PC-9 (cell line): ENCODE measurements at regions of chr5 and their contacts with region 1.

Region 1: GRCh38 chr5:151315998-151316597 is 12.5 kb upstream of the SLC36A3 start:
- DNase-seq: peak; percentile 55 to 78
- H3K4me3 ChIP-seq: no peak overlapping the region
- H3K27ac ChIP-seq: no peak overlapping the region
- H3K4me1 ChIP-seq: no peaks in the 10 kb centered on the region
- H3K27me3 ChIP-seq: peaks cover 7% of the 10 kb centered on the region; the same call in 1 of the 2 replicates
- CTCF ChIP-seq: peak; percentile 91

Region 2: DNA sequence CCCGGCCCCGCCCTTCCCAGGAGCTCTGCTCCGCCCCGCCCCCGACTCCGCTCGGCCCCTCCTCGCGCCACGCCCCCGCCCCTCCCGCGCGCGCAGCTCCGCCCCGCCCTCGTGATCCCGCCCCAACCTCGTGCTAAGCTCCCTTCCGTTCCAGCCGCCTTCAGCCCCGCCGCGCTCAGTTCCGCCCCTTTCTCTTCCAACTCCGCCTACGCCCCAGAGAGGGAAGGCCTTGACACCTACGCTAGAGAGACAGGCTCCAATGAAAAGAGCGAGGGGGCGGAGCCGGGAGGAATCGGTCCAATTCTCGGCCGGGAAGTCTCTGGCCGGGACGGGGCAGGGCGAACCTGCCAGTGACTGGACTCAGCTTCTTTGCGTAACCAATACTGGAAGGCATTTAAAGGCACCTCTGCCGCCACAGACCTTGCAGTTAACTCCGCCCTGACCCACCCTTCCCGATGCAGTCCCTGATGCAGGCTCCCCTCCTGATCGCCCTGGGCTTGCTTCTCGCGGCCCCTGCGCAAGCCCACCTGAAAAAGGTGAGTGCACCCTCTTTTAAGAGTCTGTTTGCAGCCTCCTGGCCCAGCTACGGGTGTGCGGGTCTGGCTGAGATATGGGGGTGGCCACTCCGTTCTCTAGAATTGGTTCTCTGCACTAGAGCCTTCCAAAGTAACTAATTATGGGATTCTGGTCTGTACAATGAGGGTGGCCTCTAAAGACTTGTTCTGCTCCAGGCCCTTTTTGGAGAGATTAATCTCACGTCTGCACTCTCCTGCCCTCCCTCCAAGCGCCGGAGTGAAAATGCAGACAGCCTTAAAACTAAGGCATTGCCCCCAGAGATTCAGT is 63.1 kb before region 1 on chr5 and contains the start of gene GM2A:
- CTCF ChIA-PET with region 1: interaction called, 11 read pairs
- POLR2A ChIA-PET with region 1: no interaction called
- intact Hi-C with region 1: no loop called
- DNase-seq: peak; percentile 98 to 100
- H3K4me3 ChIP-seq: peak within 1 kb of the TSS; percentile 97
- H3K27ac ChIP-seq: no peak within 1 kb of the TSS
- H3K4me1 ChIP-seq: peaks cover 20% of the 10 kb centered on the region
- H3K27me3 ChIP-seq: no peaks in the 10 kb centered on the region
- CTCF ChIP-seq: no peak
- total RNA-seq, gene GM2A: 24.5 and 26.7 TPM in 2 replicates

Region 3: GRCh38 chr5:151378616-151379015 is 62.5 kb after region 1 on chr5:
- CTCF ChIA-PET with region 1: no interaction called
- POLR2A ChIA-PET with region 1: no interaction called
- intact Hi-C with region 1: no loop called
- DNase-seq: no peak
- H3K4me3 ChIP-seq: no peak overlapping the region
- H3K27ac ChIP-seq: no peak overlapping the region
- H3K4me1 ChIP-seq: no peaks in the 10 kb centered on the region; the same call in 1 of the 2 replicates
- H3K27me3 ChIP-seq: no peaks in the 10 kb centered on the region
- CTCF ChIP-seq: no peak

Region 4: DNA sequence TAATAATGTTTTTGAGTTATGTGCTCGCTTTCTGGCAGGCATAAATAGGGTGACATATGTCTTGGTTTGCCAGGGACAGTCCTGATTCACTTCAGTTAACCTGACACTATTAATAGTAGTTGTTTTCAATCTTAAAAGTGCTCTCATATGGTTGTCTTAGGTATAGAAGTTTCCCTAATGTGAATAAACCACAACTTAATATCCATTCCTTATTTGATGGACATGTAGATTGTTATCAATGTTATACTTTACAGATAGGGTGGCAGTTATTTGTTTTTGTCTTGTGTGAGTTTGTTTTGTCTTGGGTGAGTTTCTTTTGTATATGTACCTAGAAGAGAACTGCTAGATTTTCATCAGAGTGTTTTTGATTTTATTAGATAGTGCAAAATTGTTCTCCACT is 463.5 kb after region 1 on chr5:
- CTCF ChIA-PET with region 1: no interaction called
- POLR2A ChIA-PET with region 1: no interaction called
- intact Hi-C with region 1: no loop called
- DNase-seq: no peak
- H3K4me3 ChIP-seq: no peak overlapping the region
- H3K27ac ChIP-seq: no peak overlapping the region
- H3K4me1 ChIP-seq: peaks cover 39% of the 10 kb centered on the region
- H3K27me3 ChIP-seq: no peaks in the 10 kb centered on the region
- CTCF ChIP-seq: no peak